Mammary epithelial cell (primary cell): ENCODE measurements at regions of chr2 and their contacts with region 1.

Region 1: GRCh38 chr2:37795938-37796337 is 124.5 kb upstream of the CDC42EP3 start:
- DNase-seq: peak; percentile 84
- H3K4me3 ChIP-seq: no peak overlapping the region
- H3K27ac ChIP-seq: peak overlapping the region; percentile 30
- H3K4me1 ChIP-seq: peaks cover 25% of the 10 kb centered on the region
- H3K27me3 ChIP-seq: no peaks in the 10 kb centered on the region
- CTCF ChIP-seq: no peak

Region 2: DNA sequence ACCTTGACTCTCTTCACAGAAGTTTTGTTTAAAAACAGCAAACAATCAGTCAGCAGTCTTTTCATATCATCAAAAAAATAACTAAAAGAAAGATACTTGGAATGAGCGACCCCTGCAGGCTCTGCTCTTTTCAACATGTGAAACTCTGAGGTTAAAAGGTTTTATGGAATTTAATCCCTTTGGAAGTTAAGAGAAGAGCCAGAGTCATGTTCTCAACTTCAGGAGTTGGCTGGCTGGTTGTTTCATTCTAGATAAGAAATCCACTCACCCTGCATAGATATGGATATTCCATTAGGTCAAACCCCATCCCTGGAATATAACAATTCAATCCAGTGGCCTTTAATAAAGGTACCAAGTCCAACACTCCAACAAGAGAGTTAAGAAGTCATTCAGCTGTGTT is 13.6 kb after region 1 on chr2:
- CTCF ChIA-PET with region 1: no interaction called
- dilution Hi-C with region 1: no loop called
- in situ Hi-C with region 1: no loop called
- intact Hi-C with region 1: no loop called
- DNase-seq: peak; percentile 42
- H3K4me3 ChIP-seq: no peak overlapping the region
- H3K27ac ChIP-seq: no peak overlapping the region
- H3K4me1 ChIP-seq: no peaks in the 10 kb centered on the region
- H3K27me3 ChIP-seq: no peaks in the 10 kb centered on the region
- CTCF ChIP-seq: peak; percentile 63 to 65

Region 3: GRCh38 chr2:37837628-37838328 is 41.8 kb after region 1 on chr2:
- CTCF ChIA-PET with region 1: no interaction called
- dilution Hi-C with region 1: no loop called
- in situ Hi-C with region 1: no loop called
- intact Hi-C with region 1: no loop called
- DNase-seq: no peak
- H3K4me3 ChIP-seq: no peak overlapping the region
- H3K27ac ChIP-seq: no peak overlapping the region
- H3K4me1 ChIP-seq: no peaks in the 10 kb centered on the region
- H3K27me3 ChIP-seq: no peaks in the 10 kb centered on the region
- CTCF ChIP-seq: no peak

Region 4: DNA sequence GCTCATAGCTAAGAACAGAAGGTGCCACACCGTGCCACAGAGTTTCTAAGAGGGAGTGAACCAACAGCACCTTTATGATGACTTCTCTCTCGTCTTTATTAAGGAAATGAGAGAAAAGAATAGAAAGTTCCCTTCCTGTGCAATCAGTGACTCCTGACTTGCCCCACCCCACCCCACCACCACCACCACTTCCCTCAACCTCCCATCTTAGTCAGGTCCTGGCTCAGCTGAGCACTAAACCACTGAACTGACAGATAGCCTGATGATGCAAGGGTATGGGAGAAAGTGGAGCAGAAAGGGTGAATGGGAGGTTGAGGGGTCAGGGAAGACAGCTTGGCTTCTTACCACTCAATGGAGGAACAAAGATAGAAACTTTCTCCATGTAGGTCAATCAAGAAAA is 54.0 kb after region 1 on chr2:
- CTCF ChIA-PET with region 1: no interaction called
- dilution Hi-C with region 1: loop called (anchors 5 kb)
- in situ Hi-C with region 1: no loop called
- intact Hi-C with region 1: no loop called
- DNase-seq: no peak
- H3K4me3 ChIP-seq: no peak overlapping the region
- H3K27ac ChIP-seq: no peak overlapping the region
- H3K4me1 ChIP-seq: peaks cover 7% of the 10 kb centered on the region
- H3K27me3 ChIP-seq: no peaks in the 10 kb centered on the region
- CTCF ChIP-seq: no peak